Posterior vena cava (tissue), 2 donors: ENCODE measurements at regions of chr4 and their contacts with region 1.

Region 1: GRCh38 chr4:80948141-80948540 is 82.4 kb upstream of the BMP3 start:
- DNase-seq: no peak

Region 2: GRCh38 chr4:79134767-79135166 is 1813.4 kb before region 1 on chr4:
- intact Hi-C with region 1: loop called in 1 of 2 experiments (anchors 10 kb)
- DNase-seq: no peak

Region 3: DNA sequence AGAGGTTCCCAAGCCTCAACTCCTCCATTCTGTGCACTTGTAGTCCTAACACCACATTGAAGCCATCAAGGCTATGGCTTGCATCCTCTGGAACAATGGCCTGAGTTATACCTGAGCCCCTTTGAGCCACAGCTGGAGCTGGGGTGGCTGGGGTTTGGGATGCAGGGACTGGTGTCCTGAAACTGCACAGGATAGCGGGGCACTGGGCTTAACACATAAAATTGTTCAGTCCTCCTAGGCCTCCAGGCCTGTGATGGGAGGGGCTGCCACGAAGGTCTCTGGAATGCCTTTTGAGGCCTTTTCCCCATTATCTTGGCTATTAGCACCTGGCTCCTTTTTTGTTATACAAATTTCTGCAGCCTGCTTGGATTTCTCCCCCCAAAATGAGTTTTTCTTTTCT is 577.1 kb before region 1 on chr4:
- intact Hi-C with region 1: no loop called
- DNase-seq: no peak